HepG2 (cell line): ENCODE measurements at regions of chr4 and their contacts with region 1.

Region 1: GRCh38 chr4:149264093-149264733 is 551.4 kb downstream of the IQCM start:
- DNase-seq: peak; percentile 50
- ATAC-seq: peak; percentile 88
- H3K4me3 ChIP-seq: no peak overlapping the region
- H3K27ac ChIP-seq: no peak overlapping the region
- H3K4me1 ChIP-seq: no peaks in the 10 kb centered on the region
- H3K27me3 ChIP-seq: no peaks in the 10 kb centered on the region
- CTCF ChIP-seq: peak; percentile 75
- EP300 ChIP-seq: no peak
- POLR2A ChIP-seq: no peak
- RAD21 ChIP-seq: 0 out of 2 replicates have a peak, but pooled peaks have one; percentile 29

Region 2: GRCh38 chr4:147984065-147984777 is 1280.0 kb before region 1 on chr4:
- CTCF ChIA-PET with region 1: interaction called, 6 read pairs
- POLR2A ChIA-PET with region 1: no interaction called
- in situ Hi-C with region 1: loop called (anchors 10 kb)
- intact Hi-C with region 1: no loop called
- DNase-seq: peak; percentile 38
- ATAC-seq: peak; percentile 93
- H3K4me3 ChIP-seq: no peak overlapping the region
- H3K27ac ChIP-seq: no peak overlapping the region
- H3K4me1 ChIP-seq: no peaks in the 10 kb centered on the region
- H3K27me3 ChIP-seq: no peaks in the 10 kb centered on the region; a peak in 1 of 5 replicates
- CTCF ChIP-seq: peak; percentile 77
- EP300 ChIP-seq: no peak
- POLR2A ChIP-seq: no peak
- RAD21 ChIP-seq: 0 out of 2 replicates have a peak, but pooled peaks have one; percentile 36

Region 3: GRCh38 chr4:148998719-148999118 is 265.5 kb before region 1 on chr4:
- CTCF ChIA-PET with region 1: no interaction called
- POLR2A ChIA-PET with region 1: no interaction called
- in situ Hi-C with region 1: loop called (anchors 25 kb)
- intact Hi-C with region 1: loop called (anchors 1 kb)
- DNase-seq: peak; percentile 4
- ATAC-seq: peak; percentile 31; the same call in 1 of the 3 replicates
- H3K4me3 ChIP-seq: no peak overlapping the region
- H3K27ac ChIP-seq: no peak overlapping the region
- H3K4me1 ChIP-seq: no peaks in the 10 kb centered on the region
- H3K27me3 ChIP-seq: no peaks in the 10 kb centered on the region
- CTCF ChIP-seq: peak; percentile 32; the same call in 1 of the 2 replicates
- EP300 ChIP-seq: no peak
- POLR2A ChIP-seq: no peak
- RAD21 ChIP-seq: no peak

Region 4: GRCh38 chr4:149279776-149280175 is 15.6 kb after region 1 on chr4:
- CTCF ChIA-PET with region 1: no interaction called
- POLR2A ChIA-PET with region 1: no interaction called
- in situ Hi-C with region 1: no loop called
- intact Hi-C with region 1: no loop called
- DNase-seq: no peak
- ATAC-seq: no peak
- H3K4me3 ChIP-seq: no peak overlapping the region
- H3K27ac ChIP-seq: no peak overlapping the region
- H3K4me1 ChIP-seq: no peaks in the 10 kb centered on the region
- H3K27me3 ChIP-seq: no peaks in the 10 kb centered on the region
- CTCF ChIP-seq: no peak
- EP300 ChIP-seq: no peak
- POLR2A ChIP-seq: no peak
- RAD21 ChIP-seq: no peak